GM10248 (cell line): ENCODE measurements at regions of chr12 and their contacts with region 1.

Region 1: DNA sequence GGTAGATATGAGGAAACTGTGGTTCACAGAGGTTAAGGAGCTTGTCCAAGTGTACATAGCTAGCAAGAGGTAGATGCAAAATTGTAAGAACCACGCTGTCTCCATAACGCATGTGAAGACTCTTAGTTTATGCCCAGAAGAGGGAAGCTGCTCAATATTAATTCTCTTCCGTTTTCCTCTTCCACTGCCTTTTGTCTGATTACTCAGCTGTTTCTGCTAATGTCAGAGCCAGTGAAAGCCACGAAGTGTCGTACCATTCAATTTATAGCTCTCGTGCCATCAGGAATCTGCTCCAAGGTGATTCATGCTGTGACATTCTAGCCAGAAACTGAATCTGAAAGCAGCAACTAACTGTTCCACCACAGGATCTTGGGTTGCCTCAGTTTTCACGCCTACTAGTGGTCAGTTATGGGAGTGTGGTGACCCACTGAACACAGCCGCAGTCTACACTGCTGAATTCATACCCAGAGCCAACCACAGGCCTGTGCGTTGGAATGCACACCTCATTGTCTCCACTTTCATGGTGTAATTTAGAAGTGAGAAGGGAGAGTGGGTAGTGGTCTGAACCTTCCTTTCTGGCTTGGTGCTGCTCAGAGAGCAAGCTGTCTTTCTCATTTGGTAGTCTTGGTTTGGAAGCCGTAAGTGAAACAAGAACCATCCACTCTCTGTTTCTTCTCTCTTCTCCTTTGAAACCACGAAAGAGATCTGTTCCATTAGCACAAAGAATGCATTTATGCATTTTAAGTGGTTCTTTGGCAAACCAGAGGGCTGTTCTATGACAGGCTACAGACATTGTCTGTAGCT is 74.2 kb upstream of the NAP1L1 start:
- DNase-seq: peak; percentile 69
- CTCF ChIP-seq: peak; percentile 64

Region 2: DNA sequence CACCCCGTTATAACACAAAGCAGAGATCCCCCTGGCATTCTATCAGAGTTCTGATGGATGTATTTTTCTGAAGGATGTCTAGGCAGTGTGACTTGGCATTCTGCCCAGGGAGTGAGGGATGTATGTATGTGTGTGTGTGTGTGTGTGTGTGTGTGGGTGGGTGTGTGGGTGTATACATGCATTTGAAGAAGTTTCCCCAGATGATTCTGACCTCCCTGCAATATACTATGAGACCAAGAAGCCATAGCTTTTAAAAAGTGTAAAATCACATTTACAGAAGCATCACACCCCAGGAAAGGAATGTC is 14.5 kb before region 1 on chr12:
- CTCF ChIA-PET with region 1: interaction called, 22 read pairs
- POLR2A ChIA-PET with region 1: no interaction called
- DNase-seq: no peak
- CTCF ChIP-seq: no peak

Region 3: GRCh38 chr12:76176940-76177339 is 18.2 kb after region 1 on chr12:
- CTCF ChIA-PET with region 1: interaction called, 27 read pairs
- POLR2A ChIA-PET with region 1: no interaction called
- DNase-seq: no peak
- CTCF ChIP-seq: no peak

Region 4: DNA sequence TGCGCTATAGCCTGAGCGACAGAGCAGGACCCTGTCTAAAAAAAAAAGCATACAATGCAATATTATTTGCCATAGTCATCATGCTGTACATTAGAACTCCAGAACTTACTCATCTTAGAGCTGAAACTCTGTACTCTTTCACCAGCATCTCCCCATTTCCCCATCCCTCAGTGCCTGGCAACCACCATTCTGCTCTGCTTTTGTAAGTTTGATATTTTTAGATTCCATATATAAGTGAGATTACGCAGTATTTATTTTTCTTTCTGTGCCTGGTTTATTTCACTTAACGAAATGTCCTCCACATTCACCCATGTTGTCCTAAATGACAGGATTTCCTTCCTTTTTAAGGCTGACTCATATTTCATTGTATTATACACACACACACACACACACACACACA is 67.7 kb after region 1 on chr12:
- CTCF ChIA-PET with region 1: no interaction called
- POLR2A ChIA-PET with region 1: no interaction called
- DNase-seq: no peak
- CTCF ChIP-seq: no peak